Ascending aorta (tissue), 2 donors: ENCODE measurements at regions of chr1 and their contacts with region 1.

Region 1: DNA sequence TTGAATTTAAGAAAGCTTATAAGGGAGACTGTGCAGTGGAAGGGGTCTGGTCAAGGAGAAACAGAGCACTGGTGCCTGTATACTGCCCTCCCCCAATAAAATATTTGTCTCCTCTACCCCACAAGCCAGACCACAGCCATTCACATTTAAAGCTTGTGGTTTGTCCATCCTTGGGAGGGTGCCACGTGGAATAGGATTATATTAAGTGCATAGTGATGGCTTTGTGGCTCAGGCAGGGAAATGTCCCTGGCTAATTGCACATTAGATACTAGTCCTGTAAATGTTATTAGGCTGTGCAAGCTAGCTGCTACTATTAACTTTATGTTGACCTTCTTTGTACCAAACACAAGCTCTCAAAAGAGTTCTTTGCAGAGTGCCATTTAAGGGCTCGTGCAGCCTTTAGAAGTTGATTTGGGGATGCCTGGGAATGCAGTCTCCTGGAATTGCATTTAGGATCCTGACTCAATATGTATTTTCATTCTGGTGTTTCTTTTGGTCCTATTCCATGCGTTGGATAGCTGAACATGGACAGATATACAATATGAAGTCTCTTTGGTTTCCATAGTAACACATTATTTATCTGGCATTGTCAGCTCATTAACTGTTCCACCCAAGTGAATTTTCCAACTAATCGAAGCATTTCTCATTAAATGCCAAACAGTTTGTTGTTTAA is 210.6 kb downstream of the ROR1 start:
- DNase-seq: no peak
- H3K4me3 ChIP-seq: peak overlapping the region in 1 of 2 donors; percentile 16
- H3K27ac ChIP-seq: peak overlapping the region; percentile 54 to 65
- H3K4me1 ChIP-seq: peaks cover 14 to 39% of the 10 kb centered on the region in 2 donors
- H3K27me3 ChIP-seq: no peaks in the 10 kb centered on the region
- CTCF ChIP-seq: no peak

Region 2: DNA sequence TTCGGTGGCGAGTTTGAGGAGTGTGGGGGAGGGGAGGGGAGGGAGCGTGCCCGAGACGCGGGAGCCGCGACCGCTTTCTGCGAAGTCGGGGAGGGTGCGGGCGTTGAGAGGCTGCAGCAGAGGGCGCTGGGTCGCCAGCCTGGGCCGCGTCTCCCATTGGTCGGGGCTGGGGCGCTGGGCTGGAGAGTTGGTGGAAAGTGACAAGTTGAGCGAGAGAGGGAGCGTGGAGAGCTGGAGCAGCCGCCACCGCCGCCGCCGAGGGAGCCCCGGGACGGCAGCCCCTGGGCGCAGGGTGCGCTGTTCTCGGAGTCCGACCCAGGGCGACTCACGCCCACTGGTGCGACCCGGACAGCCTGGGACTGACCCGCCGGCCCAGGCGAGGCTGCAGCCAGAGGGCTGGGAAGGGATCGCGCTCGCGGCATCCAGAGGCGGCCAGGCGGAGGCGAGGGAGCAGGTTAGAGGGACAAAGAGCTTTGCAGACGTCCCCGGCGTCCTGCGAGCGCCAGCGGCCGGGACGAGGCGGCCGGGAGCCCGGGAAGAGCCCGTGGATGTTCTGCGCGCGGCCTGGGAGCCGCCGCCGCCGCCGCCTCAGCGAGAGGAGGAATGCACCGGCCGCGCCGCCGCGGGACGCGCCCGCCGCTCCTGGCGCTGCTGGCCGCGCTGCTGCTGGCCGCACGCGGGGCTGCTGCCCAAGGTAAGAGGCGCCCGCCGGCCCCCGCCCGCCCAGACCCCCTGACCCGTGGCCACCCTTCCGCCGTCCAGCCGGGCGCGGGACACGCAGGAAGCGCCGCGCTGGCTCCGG is 210.4 kb before region 1 on chr1 and contains the start of gene ROR1:
- intact Hi-C with region 1: no loop called
- DNase-seq: peak; percentile 52 to 95
- H3K4me3 ChIP-seq: peak within 1 kb of the TSS; percentile 77 to 92
- H3K27ac ChIP-seq: peak within 1 kb of the TSS; percentile 96 to 99
- H3K4me1 ChIP-seq: peaks cover 0 to 11% of the 10 kb centered on the region in 2 donors
- H3K27me3 ChIP-seq: no peaks in the 10 kb centered on the region
- CTCF ChIP-seq: peak; percentile 80 to 87 (median 84)
- total RNA-seq, gene ROR1: 115 TPM

Region 3: DNA sequence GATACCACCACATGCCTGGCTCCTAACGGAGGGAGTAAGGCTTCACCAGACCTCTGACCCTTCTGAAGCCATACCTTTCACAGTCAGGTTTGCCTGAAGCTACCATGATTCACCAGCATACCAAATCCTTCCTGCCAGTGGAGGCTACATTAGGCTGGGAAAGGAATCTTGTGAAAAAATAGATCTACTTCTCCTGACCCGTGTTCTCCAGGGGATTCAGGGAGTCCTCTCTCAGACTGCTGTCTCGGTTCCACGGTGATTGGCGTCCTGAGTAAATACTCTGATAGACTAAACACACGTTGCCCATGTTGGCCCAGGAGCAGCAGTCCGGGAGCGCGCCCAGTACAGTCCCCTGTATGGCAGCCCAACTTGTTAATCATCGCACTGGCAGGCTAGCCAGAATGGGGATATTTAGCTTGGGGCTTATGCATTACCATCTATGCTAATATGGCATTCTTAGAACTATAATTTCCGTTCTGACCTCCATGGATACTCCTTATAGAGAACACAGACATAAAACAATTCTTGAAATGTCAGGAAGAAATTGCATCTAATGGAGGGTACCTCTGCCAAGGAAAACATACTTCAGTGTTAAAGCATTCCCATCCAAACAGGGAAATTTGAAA is 37.4 kb before region 1 on chr1:
- intact Hi-C with region 1: loop called (anchors 5 kb)
- DNase-seq: peak; percentile 69 to 93
- H3K4me3 ChIP-seq: peak overlapping the region in 1 of 2 donors; percentile 13
- H3K27ac ChIP-seq: peak overlapping the region; percentile 86 to 93
- H3K4me1 ChIP-seq: peaks cover 12 to 70% of the 10 kb centered on the region in 2 donors
- H3K27me3 ChIP-seq: no peaks in the 10 kb centered on the region
- CTCF ChIP-seq: no peak

Region 4: DNA sequence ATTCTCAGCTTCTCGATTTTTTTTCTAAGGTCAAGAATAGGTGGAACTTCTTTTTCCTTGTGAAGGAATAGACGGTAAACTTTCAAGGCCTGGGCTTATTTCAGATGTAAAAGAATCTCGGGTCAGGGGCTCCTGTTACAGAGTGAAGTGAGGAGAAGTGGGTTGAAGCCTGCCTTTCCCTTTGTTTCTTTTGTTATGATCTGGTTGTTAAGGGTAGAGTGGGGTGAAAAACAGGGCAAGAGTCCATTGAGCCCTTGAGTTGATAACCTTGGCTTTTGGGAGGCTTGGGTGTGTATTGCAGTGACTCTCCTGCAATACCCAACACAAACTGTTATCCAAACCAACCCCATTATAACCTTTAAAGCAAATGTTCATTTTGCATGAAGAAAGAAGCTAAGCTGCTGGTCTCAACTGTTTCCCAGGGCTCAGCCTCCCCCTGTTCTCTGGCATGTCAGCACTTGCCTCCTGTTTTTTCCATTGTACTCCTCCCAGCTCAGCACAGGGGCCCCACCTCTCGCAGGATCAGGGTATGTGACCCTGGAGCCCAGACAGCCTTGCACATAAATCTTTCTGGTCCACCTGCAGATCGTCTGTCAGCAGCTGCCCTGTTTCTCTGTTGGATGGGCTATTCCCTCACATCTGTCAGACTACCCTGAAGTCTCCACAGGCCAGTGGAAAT is 588.0 kb after region 1 on chr1:
- intact Hi-C with region 1: no loop called
- DNase-seq: no peak
- H3K4me3 ChIP-seq: no peak overlapping the region
- H3K27ac ChIP-seq: no peak overlapping the region
- H3K4me1 ChIP-seq: no peaks in the 10 kb centered on the region
- H3K27me3 ChIP-seq: no peaks in the 10 kb centered on the region
- CTCF ChIP-seq: no peak